ENCODE measurements at regions of chr14 and their contacts with region 1.

Region 1: GRCh38 chr14:76352639-76353281 is 23.2 kb upstream of the ESRRB start:
- DNase-seq: peak; percentile 64 to 76
- ATAC-seq: peak; percentile 71 to 87 (median 82)
- H3K4me3 ChIP-seq: peak overlapping the region; percentile 49
- H3K27ac ChIP-seq: no peak overlapping the region
- H3K4me1 ChIP-seq: peaks cover 4% of the 10 kb centered on the region
- H3K27me3 ChIP-seq: no peaks in the 10 kb centered on the region
- CTCF ChIP-seq: peak; percentile 88

Region 2: DNA sequence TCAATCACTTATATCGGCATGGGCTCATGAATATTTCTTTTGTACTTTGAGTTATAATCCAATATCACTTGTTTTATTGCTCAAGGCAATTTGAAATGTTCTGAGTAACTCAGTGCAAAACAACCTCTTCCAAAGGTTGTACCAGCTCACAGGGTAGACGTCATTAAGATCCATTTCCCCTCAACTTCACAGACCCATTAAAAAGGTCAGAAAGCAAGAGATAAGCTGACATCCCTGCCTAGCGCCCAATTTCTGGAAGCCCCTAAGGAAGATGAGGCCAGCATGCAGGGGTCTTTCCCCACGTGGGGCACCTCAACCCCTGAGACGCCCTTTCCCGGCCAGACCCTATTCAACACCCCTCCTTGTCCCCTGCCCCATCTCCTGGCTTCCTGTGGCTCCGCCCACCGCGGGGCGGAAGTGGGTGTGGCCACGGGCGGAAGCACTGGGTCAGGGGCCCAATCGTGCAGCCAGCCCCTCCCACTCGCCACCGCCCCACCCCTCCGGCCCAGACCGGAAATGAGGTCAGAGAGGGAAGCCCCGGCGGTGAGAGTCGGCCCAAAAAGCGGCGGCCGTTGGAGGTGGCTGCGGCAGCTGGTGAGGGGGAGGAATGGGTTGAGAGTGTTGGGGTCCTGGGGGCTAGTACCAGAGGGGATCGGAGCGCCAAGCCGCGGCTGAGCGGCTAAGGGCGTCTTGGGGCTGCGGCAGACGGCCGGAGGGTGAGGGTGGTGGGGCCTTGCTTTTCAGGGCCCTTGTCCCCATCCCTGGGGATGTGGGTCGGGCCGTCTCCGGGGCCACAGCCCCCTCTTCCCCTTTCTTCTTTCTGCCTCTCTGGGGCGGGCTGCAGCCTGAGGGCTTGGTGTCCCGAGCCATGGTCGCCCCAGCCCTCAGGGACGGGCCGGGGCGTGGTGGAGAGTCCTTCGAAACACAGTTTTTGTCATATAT is 201.1 kb before region 1 on chr14 and contains the start of gene GPATCH2L:
- intact Hi-C with region 1: loop called in 1 of 2 experiments (anchors 5 kb)
- DNase-seq: peak; percentile 96 to 98
- ATAC-seq: peak; percentile 100
- H3K4me3 ChIP-seq: peak within 1 kb of the TSS; percentile 96
- H3K27ac ChIP-seq: peak within 1 kb of the TSS; percentile 98
- H3K4me1 ChIP-seq: peaks cover 42% of the 10 kb centered on the region
- H3K27me3 ChIP-seq: no peaks in the 10 kb centered on the region
- CTCF ChIP-seq: no peak
- total RNA-seq, gene GPATCH2L: 29.9 to 42.6 (median 34.6) TPM

Region 3: DNA sequence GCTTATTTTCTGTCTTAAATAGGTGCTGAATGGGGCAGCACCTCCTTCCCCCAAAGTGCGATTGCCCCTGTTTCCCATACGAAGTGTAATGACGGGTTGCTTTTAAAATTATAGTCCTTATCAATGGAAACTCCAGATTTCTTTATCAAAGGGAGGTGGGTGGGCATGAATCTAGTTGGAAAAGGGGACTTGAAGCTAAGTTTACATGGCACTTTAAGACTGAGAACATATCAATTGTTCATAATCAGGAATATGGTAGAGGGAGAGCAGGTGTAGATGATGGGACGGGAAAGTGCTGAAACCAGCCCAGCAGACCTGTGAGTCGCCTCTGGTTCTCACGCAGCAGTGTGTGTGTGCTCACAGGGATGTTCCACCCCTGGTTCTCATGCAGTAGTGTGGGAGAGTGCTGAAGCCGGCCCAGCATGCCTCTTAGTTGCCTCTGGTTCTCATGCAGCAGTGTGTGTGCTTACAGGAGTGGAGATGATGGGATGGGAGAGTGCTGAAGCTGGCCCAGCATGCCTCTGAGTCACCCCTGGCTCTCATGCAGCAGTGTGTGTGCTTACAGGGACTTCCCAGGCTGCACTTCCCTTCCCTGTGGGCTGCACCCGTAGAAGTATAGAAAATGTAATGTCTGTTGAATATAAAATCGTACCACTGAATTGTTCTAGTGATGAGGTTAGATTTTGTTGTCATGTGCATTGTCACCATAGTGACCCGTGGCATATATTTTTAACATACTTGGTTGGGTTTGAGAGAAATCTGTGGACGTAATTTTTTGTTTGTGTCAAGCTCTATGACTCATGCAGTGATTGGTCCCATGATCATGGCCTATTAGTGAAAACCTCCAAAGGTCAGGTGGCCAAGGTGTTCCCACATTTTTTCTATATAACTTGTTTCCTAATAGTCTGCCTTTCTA is 149.4 kb before region 1 on chr14:
- intact Hi-C with region 1: loop called in 1 of 2 experiments (anchors 2 kb)
- DNase-seq: no peak
- ATAC-seq: peak; percentile 49 to 65 (median 60)
- H3K4me3 ChIP-seq: no peak overlapping the region
- H3K27ac ChIP-seq: no peak overlapping the region
- H3K4me1 ChIP-seq: no peaks in the 10 kb centered on the region
- H3K27me3 ChIP-seq: no peaks in the 10 kb centered on the region
- CTCF ChIP-seq: no peak

Measured in psoas muscle (tissue), 8 donors.